ENCODE measurements at regions of chr6 and their contacts with region 1.

Region 1: DNA sequence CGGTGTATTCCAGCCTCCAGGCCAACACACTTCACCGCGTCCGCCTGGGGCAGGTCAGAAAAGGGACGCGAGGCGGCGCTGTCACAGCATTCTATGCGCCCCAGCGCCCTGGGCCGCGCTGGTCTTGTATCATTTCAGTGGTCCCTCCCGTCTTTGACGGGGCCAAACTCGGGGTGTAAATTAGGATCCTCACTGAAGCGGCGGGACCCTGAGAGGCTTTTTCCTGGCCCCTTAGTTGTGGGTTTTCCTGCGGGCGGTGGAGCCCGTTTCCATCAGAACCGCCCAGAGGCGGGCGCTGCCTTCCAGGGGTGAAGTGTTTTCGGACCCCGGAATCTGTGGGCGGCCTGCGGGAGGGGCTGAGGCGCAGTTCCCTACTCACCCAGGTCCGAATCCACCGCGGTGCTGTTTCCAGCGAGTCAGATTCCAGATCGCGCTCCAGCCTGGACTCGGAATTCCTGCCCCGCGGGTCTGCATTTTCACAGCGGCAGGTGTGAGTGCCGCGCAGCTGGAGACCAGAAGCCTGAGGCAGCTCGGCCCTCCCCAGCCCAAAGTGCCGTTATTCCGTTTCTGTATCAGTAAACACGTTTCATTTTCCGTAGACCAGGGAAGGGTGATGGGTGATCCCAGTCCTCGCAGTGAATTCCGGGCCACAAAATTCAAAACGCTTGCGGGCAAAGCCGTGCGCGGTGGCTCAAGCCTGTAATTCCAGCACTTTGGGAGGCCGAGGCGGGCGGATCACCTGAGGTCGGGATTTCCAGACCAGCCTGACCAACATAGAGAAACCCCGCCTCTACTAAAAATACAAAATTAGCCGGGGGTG is 3.9 kb upstream of the MICB start:
- DNase-seq: peak; percentile 62 to 90 (median 76)
- ATAC-seq: peak; percentile 32
- H3K4me3 ChIP-seq: peak overlapping the region; percentile 65 to 81
- H3K4me3 Mint-ChIP-seq: peak overlapping the region; percentile 77
- H3K27ac ChIP-seq: peak overlapping the region; percentile 29 to 71
- H3K27ac Mint-ChIP-seq: peak overlapping the region; percentile 91
- H3K4me1 ChIP-seq: peaks cover 41% of the 10 kb centered on the region
- H3K4me1 Mint-ChIP-seq: peaks cover 49% of the 10 kb centered on the region
- H3K27me3 ChIP-seq: no peaks in the 10 kb centered on the region
- H3K27me3 Mint-ChIP-seq: no peaks in the 10 kb centered on the region
- CTCF ChIP-seq: peak; percentile 83

Region 2: GRCh38 chr6:31403283-31403989 is 90.6 kb before region 1 on chr6 and contains the start of gene MICA:
- CTCF ChIA-PET with region 1: no interaction called
- POLR2A ChIA-PET with region 1: interaction called, 5 read pairs
- intact Hi-C with region 1: loop called in 1 of 2 experiments (anchors 2 kb)
- DNase-seq: peak in 8 of 9 experiments; percentile 46 to 85 (median 70)
- ATAC-seq: peak; percentile 50
- H3K4me3 ChIP-seq: peak within 1 kb of the TSS; percentile 67
- H3K4me3 Mint-ChIP-seq: peak within 1 kb of the TSS; percentile 94
- H3K27ac ChIP-seq: peak within 1 kb of the TSS; percentile 18 to 85
- H3K27ac Mint-ChIP-seq: peak within 1 kb of the TSS; percentile 92
- H3K4me1 ChIP-seq: peaks cover 34% of the 10 kb centered on the region
- H3K4me1 Mint-ChIP-seq: peaks cover 69% of the 10 kb centered on the region
- H3K27me3 ChIP-seq: no peaks in the 10 kb centered on the region
- H3K27me3 Mint-ChIP-seq: no peaks in the 10 kb centered on the region
- CTCF ChIP-seq: no peak
- total RNA-seq, gene MICA: 5.8 to 6.2 TPM

Region 3: GRCh38 chr6:31529329-31530150 is 35.5 kb after region 1 on chr6:
- CTCF ChIA-PET with region 1: interaction called, 11 read pairs
- POLR2A ChIA-PET with region 1: interaction called, 6 read pairs
- intact Hi-C with region 1: no loop called
- DNase-seq: no peak
- ATAC-seq: peak; percentile 16
- H3K4me3 ChIP-seq: no peak overlapping the region
- H3K4me3 Mint-ChIP-seq: no peak overlapping the region
- H3K27ac ChIP-seq: no peak overlapping the region
- H3K27ac Mint-ChIP-seq: no peak overlapping the region
- H3K4me1 ChIP-seq: no peaks in the 10 kb centered on the region
- H3K4me1 Mint-ChIP-seq: peaks cover 13% of the 10 kb centered on the region
- H3K27me3 ChIP-seq: no peaks in the 10 kb centered on the region
- H3K27me3 Mint-ChIP-seq: no peaks in the 10 kb centered on the region
- CTCF ChIP-seq: no peak

Region 4: GRCh38 chr6:31597006-31597405 is 102.9 kb after region 1 on chr6:
- CTCF ChIA-PET with region 1: interaction called, 62 read pairs
- POLR2A ChIA-PET with region 1: interaction called, 3 read pairs
- intact Hi-C with region 1: loop called (anchors 1 kb)
- DNase-seq: peak in 5 of 9 experiments; percentile 47 to 86 (median 56)
- ATAC-seq: peak; percentile 83
- H3K4me3 ChIP-seq: no peak overlapping the region
- H3K4me3 Mint-ChIP-seq: peak overlapping the region; percentile 3
- H3K27ac ChIP-seq: no peak overlapping the region
- H3K27ac Mint-ChIP-seq: peak overlapping the region; percentile 79
- H3K4me1 ChIP-seq: peaks cover 53% of the 10 kb centered on the region
- H3K4me1 Mint-ChIP-seq: peaks cover 50% of the 10 kb centered on the region
- H3K27me3 ChIP-seq: no peaks in the 10 kb centered on the region
- H3K27me3 Mint-ChIP-seq: no peaks in the 10 kb centered on the region
- CTCF ChIP-seq: peak; percentile 66